ENCODE measurements at regions of chr3 and their contacts with region 1.

Region 1: GRCh38 chr3:156674046-156674910 is at the start of gene TIPARP:
- DNase-seq: peak; percentile 99
- ATAC-seq: peak; percentile 79 to 89
- H3K4me3 ChIP-seq: peak within 1 kb of the TSS; percentile 77 to 92 (median 91)
- H3K27ac ChIP-seq: peak within 1 kb of the TSS; percentile 95 to 100 (median 98)
- H3K4me1 ChIP-seq: peaks cover 34 to 37% of the 10 kb centered on the region in 2 donors
- H3K27me3 ChIP-seq: no peaks in the 10 kb centered on the region
- CTCF ChIP-seq: peak; percentile 63 to 87 (median 84)
- POLR2A ChIP-seq: peak; percentile 98 to 99
- total RNA-seq, gene TIPARP: 16.0 to 50.2 (median 31.7) TPM

Region 2: GRCh38 chr3:156151824-156152428 is 522.4 kb before region 1 on chr3:
- in situ Hi-C with region 1: no loop called
- intact Hi-C with region 1: loop called (anchors 10 kb)
- DNase-seq: peak in 1 of 2 donors; percentile 28
- ATAC-seq: no peak
- H3K4me3 ChIP-seq: no peak overlapping the region
- H3K27ac ChIP-seq: no peak overlapping the region
- H3K4me1 ChIP-seq: peaks cover 9 to 20% of the 10 kb centered on the region in 2 donors
- H3K27me3 ChIP-seq: no peaks in the 10 kb centered on the region
- CTCF ChIP-seq: peak in 4 of 5 experiments; percentile 31 to 57 (median 46)
- POLR2A ChIP-seq: no peak

Region 3: DNA sequence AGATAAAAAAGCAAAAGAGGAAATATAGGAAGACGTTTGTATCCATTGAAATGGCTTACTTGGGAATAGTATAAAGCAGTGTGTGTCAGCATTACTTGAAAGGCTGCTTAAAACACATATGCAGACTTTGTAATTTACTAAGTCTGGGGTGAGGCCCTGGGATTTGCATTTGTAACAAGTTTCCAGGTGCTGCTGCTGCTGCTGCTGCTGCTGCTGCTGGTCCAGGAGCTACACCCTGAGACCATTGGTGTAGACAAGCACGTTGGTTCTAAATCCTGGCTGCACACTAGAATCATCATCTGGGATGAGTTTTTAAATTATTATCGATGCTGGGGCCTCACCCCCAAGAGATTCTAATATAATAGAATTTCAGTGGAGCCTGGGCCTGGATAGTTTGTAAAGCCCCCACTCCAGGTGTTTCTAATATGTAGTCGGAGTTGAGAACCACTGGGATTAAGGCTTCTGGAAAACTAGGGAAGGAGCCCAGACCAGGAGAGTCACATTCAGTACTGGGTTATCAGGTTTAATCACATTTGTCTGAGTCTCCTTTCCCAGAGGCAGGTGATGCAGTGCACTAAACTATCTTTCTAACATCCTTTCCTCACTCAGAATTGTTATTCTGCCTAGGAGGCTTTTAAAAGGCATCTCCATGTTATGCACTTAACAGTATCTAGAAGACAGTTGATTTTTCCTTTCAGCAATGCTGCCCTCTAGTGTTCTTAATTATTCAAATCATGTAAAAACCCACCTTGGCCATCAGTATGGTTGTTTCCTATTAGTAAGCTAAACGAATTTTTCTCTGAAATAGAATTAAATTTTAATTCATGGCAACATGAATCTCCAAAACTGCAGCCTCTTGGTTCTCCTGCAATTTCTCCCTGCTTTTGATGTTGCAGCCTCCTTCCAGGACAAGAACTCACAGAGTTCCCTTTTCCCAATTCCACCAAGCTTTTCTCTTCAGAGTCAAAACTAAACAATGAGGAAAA is 164.8 kb before region 1 on chr3:
- in situ Hi-C with region 1: no loop called
- intact Hi-C with region 1: no loop called
- DNase-seq: no peak
- ATAC-seq: peak; percentile 74 to 76
- H3K4me3 ChIP-seq: no peak overlapping the region
- H3K27ac ChIP-seq: no peak overlapping the region
- H3K4me1 ChIP-seq: no peaks in the 10 kb centered on the region
- H3K27me3 ChIP-seq: no peaks in the 10 kb centered on the region
- CTCF ChIP-seq: peak; percentile 29 to 63 (median 45)
- POLR2A ChIP-seq: no peak

Region 4: DNA sequence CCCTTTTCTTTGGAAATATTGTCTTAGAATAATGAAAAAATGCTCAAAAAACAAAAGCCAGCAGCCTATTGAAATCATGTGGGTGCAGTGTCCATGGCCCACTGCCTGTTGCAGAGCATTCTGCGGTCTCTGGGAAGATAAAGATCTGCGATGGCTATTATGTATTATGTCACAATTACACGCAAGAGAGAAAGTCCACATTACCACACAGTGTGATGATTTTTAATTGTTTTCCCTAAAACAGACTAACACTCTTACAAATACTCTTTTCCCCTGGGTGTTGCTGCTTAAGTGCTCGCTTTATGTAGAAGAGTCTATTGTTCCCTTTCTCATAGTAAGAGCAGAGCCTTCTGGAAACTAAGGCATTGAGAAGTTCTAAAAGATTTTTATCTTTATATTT is 151.6 kb before region 1 on chr3:
- in situ Hi-C with region 1: no loop called
- intact Hi-C with region 1: no loop called
- DNase-seq: no peak
- ATAC-seq: no peak
- H3K4me3 ChIP-seq: no peak overlapping the region
- H3K27ac ChIP-seq: no peak overlapping the region
- H3K4me1 ChIP-seq: no peaks in the 10 kb centered on the region
- H3K27me3 ChIP-seq: no peaks in the 10 kb centered on the region
- CTCF ChIP-seq: no peak
- POLR2A ChIP-seq: no peak

Region 5: DNA sequence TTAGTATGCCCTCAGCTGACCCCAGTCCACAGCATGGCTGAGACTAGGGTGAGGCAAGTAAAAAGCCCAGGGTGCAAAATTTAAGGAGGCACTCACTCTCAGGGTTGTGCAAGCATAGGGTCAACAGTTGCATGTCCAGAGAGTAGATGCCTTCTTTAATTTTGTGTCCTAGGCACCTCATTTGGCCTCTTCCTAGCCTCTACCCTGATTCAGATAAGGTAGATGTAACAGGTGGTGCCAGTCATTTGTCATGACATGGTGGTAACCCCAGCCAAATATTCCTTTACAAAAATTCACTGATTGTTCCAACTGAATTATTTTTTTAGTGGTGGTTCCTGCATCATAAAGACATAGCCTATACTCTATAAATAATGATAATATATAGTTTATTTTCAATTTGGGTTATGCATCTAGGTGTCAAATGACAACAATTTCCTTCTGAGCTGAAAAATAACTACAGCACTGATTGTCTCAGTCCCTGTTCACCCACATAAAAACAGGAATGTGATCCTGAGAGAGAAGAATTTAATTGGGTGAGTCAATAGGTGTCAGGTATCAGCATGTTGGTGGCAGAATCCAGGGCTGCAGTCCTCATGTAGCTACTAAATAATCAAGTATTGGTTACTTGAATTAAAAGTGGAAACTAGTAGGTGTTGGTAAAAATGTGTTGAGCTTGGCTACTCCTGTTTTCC is 44.1 kb before region 1 on chr3:
- in situ Hi-C with region 1: no loop called
- intact Hi-C with region 1: loop called (anchors 2 kb)
- DNase-seq: no peak
- ATAC-seq: peak; percentile 67 to 77
- H3K4me3 ChIP-seq: peak overlapping the region in 1 of 4 donors; percentile 27
- H3K27ac ChIP-seq: peak overlapping the region; percentile 66 to 73 (median 69)
- H3K4me1 ChIP-seq: peaks cover 17 to 44% of the 10 kb centered on the region in 2 donors
- H3K27me3 ChIP-seq: no peaks in the 10 kb centered on the region
- CTCF ChIP-seq: no peak
- POLR2A ChIP-seq: no peak

Region 6: DNA sequence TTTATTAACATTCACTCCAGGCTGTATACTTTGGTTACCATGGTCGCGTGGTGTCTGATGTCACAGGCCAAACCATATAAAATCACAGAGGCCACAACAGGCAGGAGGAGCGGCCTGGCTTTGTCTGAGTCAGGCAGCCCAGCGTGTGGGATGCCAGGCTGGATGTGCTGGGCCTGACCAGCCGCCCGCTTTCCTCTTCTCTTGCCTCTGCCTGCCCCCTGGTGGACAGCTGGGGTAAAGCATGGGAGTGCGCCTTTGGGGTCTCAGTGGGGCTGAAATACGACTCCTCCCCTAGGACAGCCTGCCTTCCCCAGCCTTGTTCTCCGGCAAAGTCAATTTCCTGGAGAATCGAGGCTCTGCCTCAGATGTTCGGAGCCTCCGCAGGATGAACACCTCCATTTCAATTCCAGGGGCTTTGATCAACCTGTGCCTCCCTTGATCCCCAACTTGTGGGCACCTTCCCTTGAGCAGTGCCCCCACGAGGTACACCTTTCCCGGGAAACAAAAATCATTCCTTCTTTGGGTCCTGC is 407.5 kb after region 1 on chr3:
- in situ Hi-C with region 1: loop called in 3 of 4 experiments (anchors 5 to 25 kb)
- intact Hi-C with region 1: loop called (anchors 1 kb)
- DNase-seq: peak; percentile 73 to 81
- ATAC-seq: peak; percentile 45 to 60
- H3K4me3 ChIP-seq: no peak overlapping the region
- H3K27ac ChIP-seq: peak overlapping the region; percentile 20 to 75 (median 56)
- H3K4me1 ChIP-seq: peaks cover 18 to 28% of the 10 kb centered on the region in 2 donors
- H3K27me3 ChIP-seq: no peaks in the 10 kb centered on the region
- CTCF ChIP-seq: peak; percentile 91 to 98 (median 96)
- POLR2A ChIP-seq: peak; percentile 36

Region 7: DNA sequence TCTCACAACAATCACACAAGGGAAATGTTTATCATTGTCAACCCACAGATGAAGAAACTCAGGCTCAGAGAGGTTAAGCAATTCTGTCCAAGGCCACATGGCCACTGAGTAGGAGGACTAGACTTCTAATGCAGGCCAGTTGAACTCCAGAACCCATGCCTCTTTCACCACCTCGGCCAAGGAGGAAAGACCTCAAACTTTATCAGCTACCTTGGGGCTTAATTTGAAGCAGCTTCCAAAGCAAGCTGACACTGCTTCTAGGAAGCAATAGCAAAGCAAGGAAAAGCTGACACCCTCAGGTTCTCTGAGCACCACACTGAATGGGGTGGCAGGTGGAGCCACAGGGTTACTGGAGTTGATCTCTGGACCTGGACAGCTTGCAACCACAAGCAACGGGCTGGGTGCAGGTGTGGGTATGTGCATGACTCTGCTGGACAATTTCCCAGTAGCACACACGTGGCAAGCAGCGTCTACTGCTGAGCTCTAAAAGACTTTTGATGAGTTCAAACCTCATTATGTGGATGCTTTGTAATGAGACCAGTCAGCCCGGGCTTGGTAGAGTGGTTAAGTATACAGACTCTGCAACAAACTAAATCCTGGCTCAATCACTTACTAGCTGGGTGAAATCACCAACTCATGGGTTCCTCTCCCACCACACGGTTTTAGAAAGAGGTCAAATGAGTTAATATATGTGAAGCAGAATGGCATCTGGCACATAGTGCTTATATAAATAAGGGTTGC is 462.5 kb after region 1 on chr3:
- in situ Hi-C with region 1: loop called in 2 of 4 experiments (anchors 10 kb)
- intact Hi-C with region 1: loop called (anchors 2 kb)
- DNase-seq: peak; percentile 57 to 72
- ATAC-seq: peak; percentile 49 to 50
- H3K4me3 ChIP-seq: no peak overlapping the region
- H3K27ac ChIP-seq: peak overlapping the region; percentile 76 to 86 (median 82)
- H3K4me1 ChIP-seq: peaks cover 58 to 59% of the 10 kb centered on the region in 2 donors
- H3K27me3 ChIP-seq: no peaks in the 10 kb centered on the region
- CTCF ChIP-seq: no peak
- POLR2A ChIP-seq: no peak